ENCODE measurements at regions of chr17 and their contacts with region 1.

Region 1: DNA sequence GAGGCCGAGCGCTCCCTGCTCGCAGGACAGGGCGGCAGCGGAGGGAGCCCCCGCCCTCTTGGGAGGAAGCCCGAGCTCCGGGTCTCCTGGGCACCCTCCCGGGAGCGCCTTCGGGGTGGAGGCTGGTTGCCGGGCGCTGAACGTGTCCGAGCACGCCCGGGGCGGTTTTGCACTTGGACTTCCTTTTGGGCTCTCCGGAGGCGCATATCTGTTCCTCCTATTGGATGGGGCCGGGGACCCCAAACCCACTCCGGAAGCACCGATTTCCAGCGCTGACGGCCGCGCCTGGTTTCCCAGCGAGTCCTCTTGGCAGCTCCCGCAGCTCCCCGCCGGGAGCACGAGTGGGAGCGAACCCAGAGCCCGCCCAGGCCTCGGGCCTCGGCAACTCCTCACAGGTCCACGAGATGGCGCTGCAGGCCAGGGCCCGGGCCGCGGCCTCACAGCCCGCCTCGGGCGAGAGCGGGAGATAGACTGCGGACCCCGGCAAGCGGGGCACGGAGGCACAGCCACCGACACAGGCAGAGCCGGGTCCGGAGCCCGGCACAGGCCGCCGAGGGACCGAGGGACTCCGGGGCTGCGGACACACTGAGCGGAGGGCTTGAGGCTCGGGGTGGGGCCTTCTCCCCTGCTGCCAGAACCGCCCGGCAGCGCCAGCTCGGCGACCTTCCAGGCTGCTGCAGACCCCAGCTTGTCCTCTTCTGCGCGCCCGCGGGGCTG is 12.7 kb downstream of the TBX2 start:
- DNase-seq: peak; percentile 51 to 96 (median 78)

Region 2: DNA sequence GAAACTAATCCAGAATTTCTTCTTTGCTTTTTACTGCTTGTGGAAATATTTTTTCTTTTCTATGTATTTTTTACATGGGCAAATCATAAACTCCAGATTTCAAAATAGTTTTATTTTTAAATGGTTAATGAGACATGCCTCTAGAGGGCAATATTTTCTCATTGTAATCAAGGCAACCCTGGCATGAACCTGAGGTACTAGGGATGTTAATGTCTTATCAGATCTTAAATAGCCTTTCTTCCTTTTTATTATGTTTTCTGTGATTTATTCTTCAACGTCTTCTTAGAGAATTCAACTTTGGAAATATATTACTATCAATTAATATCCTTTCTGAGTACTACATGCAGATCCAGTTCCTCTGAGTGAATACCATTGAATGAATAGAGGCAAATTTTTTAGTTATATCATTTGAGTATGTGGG is 410.0 kb before region 1 on chr17:
- intact Hi-C with region 1: loop called (anchors 5 kb)
- DNase-seq: no peak

Region 3: GRCh38 chr17:61551255-61551742 is 139.0 kb after region 1 on chr17:
- intact Hi-C with region 1: loop called (anchors 2 kb)
- DNase-seq: no peak

Region 4: GRCh38 chr17:61837175-61838051 is 425.1 kb after region 1 on chr17:
- intact Hi-C with region 1: loop called (anchors 2 kb)
- DNase-seq: peak in 6 of 10 donors; percentile 10 to 81 (median 21)

Region 5: GRCh38 chr17:62065598-62066468 is 653.5 kb after region 1 on chr17:
- intact Hi-C with region 1: loop called (anchors 1 kb)
- DNase-seq: peak; percentile 98 to 100 (median 99)